Activated T-helper 2 cell treated with anti-CD3 and anti-CD28 coated beads, Interferon-gamma antibody, Interleukin-2, Interleukin-4, amounts not matched to agents 10 μg/mL and 5 μg/mL and 100 μg/mL, durations not matched to agents 14 hours and 24 hours and 36 hours (primary cell): ENCODE measurements at regions of chr1 and their contacts with region 1.

Region 1: DNA sequence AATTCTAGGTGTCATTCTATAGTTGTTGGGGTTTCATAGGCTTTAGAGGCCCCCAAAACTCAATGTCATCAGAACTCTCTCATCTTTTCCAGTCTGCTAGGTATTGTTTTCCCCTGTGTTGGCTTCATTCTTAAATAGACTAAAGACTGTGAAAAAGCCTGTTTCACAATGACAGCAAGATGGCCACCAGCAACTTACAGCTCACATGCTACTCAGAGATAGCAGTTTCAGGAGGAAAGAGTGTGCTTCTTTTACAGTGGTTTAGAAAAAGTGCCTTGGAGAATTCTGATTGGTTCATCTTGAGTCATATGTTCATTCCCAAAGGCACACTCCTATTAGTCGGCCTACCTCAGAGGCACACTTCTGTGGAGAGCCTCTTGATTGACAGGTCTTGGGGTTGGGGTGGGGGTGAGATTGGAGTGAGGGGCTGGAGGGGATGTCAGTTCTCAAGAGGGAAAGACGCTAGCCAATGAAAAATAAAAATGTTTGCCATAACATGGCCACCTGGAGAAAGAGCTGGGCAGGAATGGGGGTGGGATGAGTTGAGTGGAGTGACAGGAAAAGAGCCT is 8.5 kb downstream of the IL23R start:
- DNase-seq: no peak
- H3K4me3 Mint-ChIP-seq: no peak overlapping the region
- H3K27ac Mint-ChIP-seq: peak overlapping the region; percentile 63
- H3K4me1 Mint-ChIP-seq: peaks cover 49% of the 10 kb centered on the region
- H3K27me3 Mint-ChIP-seq: peaks cover 4% of the 10 kb centered on the region

Region 2: GRCh38 chr1:66929999-66930822 is 244.6 kb before region 1 on chr1:
- intact Hi-C with region 1: loop called (anchors 5 kb)
- DNase-seq: peak; percentile 93
- H3K4me3 Mint-ChIP-seq: peak overlapping the region; percentile 90
- H3K27ac Mint-ChIP-seq: peak overlapping the region; percentile 91
- H3K4me1 Mint-ChIP-seq: peaks cover 55% of the 10 kb centered on the region
- H3K27me3 Mint-ChIP-seq: no peaks in the 10 kb centered on the region

Region 3: DNA sequence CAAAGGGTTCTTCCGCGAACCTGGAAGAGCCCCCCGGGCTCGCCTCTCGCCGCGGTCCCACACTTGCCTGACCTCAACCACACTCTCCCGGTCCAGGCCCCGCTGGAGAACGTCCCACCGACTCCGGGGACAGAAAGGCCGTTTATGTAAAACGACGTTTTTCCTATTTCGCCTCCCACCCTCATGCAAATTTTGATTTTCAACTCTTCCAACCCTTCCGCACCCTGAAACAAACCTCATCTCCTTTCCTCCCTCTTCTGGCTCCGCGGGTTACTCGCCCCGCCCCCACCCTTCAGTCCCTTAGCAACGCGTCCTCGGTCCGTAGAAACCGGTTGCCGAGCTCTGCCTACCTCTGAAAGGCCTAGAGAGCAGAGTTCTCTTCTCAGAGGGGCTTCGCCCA is 40.1 kb before region 1 on chr1 and contains the start of gene C1orf141:
- intact Hi-C with region 1: no loop called
- DNase-seq: no peak
- H3K4me3 Mint-ChIP-seq: peak within 1 kb of the TSS; percentile 56
- H3K27ac Mint-ChIP-seq: no peak within 1 kb of the TSS
- H3K4me1 Mint-ChIP-seq: peaks cover 14% of the 10 kb centered on the region
- H3K27me3 Mint-ChIP-seq: peaks cover 7% of the 10 kb centered on the region
- total RNA-seq, gene C1orf141: not detected in 2 replicates

Region 4: DNA sequence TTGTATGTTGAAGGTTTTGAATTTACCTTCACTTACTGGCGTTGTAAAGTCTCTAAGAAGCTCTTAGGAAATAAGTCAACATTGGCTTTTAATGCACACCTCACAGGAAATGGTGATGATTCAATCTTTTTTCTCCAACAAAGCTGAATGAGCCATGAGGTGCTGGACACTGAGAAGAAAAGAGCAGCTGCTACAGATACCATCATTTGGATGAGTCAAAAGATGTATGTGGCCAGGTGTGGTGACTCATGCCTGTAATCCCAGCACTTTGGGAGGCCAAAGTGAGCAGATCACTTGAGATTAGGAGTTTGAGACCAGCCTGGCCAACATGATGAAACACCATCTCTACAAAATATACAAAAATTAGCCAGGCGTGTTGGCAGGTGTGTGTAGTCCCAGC is 11.8 kb before region 1 on chr1:
- intact Hi-C with region 1: loop called (anchors 1 kb)
- DNase-seq: peak; percentile 40
- H3K4me3 Mint-ChIP-seq: no peak overlapping the region
- H3K27ac Mint-ChIP-seq: peak overlapping the region; percentile 58
- H3K4me1 Mint-ChIP-seq: peaks cover 41% of the 10 kb centered on the region
- H3K27me3 Mint-ChIP-seq: no peaks in the 10 kb centered on the region

Region 5: DNA sequence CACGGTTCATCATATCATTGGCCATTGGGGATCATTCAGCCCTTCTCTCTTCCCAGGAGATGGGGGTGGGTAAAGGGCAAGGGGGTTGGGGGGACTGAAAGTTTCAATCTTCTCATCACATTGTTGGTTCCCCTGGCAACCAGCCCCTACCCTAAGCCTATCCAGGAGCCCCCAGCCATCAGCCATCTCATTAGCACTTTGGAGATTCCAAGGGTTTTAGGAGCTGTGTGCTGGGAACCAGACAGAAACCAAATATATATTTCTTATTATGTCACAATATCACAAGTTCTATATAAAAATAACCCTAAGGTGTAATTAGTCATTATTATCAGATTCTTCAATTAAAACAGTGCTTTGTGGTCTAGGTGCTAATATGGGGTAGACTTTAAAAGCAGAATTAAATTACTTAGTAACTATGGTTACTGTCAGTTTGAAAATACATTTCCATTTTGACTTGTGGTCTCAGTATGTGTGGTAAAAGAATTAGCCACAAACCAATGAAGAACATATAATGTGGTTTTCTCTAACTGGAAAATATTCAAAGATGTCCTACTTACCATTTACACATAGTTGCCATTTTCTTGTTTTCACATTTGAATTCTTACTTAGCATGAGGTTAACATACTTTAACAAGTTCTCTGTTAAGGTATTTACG is 19.5 kb after region 1 on chr1:
- intact Hi-C with region 1: loop called (anchors 1 kb)
- DNase-seq: no peak
- H3K4me3 Mint-ChIP-seq: no peak overlapping the region
- H3K27ac Mint-ChIP-seq: peak overlapping the region; percentile 60
- H3K4me1 Mint-ChIP-seq: peaks cover 10% of the 10 kb centered on the region
- H3K27me3 Mint-ChIP-seq: no peaks in the 10 kb centered on the region

Region 6: GRCh38 chr1:67214420-67215174 is 39.8 kb after region 1 on chr1:
- intact Hi-C with region 1: loop called (anchors 2 kb)
- DNase-seq: no peak
- H3K4me3 Mint-ChIP-seq: no peak overlapping the region
- H3K27ac Mint-ChIP-seq: no peak overlapping the region
- H3K4me1 Mint-ChIP-seq: peaks cover 32% of the 10 kb centered on the region
- H3K27me3 Mint-ChIP-seq: no peaks in the 10 kb centered on the region